IMR-90 (cell line): ENCODE measurements at regions of chr2 and their contacts with region 1.

Region 1: DNA sequence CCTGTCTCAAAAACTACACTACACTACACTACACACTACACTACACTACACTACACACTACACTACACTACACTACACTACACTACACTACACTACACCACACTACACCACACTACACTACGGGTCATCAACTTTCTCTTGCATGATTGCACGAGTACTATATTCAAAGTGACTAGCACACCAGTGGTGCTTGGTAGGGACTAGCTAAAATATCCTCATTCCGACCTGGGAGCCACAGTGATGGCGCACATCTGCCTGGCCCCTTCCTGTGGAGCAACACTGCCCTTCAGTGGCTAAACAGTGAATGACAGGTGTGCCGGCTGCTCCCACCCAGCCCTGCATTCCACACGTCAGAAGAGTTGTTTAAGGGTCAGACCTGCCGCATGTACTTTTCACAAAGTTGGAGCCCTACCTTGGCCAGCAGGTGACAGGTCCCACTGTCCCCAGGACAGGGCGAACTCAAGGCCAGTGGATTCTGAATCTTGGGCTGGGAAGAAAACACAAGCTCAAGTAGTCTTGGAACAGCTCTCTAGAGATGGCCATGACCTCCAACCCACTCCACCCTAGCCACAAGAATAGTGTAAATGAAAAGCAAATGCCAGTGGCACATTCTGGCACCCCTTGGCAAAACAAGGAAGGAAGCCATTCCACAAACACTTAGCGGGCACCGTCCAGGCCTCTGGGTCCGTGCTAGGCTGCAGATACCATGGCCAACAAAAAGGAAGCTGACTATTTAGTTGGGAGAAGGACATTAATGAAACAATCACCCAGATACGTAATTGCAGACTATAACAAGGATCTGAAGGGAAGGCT is 79.7 kb upstream of the MSH2 start:
- DNase-seq: peak; percentile 66
- ATAC-seq: peak; percentile 95
- H3K4me3 ChIP-seq: no peak overlapping the region
- H3K27ac ChIP-seq: no peak overlapping the region
- H3K4me1 ChIP-seq: peaks cover 7% of the 10 kb centered on the region
- H3K27me3 ChIP-seq: peaks cover 3% of the 10 kb centered on the region; the same call in 1 of the 2 replicates
- CTCF ChIP-seq: peak; percentile 97
- POLR2A ChIP-seq: peak; percentile 67
- RAD21 ChIP-seq: peak; percentile 100

Region 2: DNA sequence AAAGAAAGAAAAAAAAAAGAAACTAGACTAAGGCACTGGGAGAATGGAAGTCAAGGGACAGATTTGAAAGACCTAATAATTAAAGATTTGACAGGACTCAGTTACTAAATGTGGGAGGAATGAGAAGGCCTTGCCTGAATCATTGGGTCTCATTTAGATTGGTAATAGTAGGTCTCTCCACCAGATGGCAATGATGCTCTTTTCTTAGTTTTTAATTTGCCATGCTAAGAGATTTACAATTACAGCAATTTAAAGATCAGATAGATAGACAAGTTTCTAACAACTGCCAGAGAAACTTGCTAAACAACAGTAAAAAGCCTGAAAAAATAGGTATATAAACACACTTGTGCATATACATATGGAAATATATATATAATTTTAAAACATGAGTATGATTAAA is 690.9 kb before region 1 on chr2:
- CTCF ChIA-PET with region 1: no interaction called
- POLR2A ChIA-PET with region 1: no interaction called
- dilution Hi-C with region 1: no loop called
- in situ Hi-C with region 1: loop called (anchors 10 kb)
- intact Hi-C with region 1: loop called (anchors 1 kb)
- DNase-seq: peak; percentile 77
- ATAC-seq: peak; percentile 89
- H3K4me3 ChIP-seq: no peak overlapping the region
- H3K27ac ChIP-seq: no peak overlapping the region
- H3K4me1 ChIP-seq: 0 out of 2 replicates have a peak, but pooled peaks cover 1% of the 10 kb centered on the region
- H3K27me3 ChIP-seq: no peaks in the 10 kb centered on the region
- CTCF ChIP-seq: peak; percentile 78
- POLR2A ChIP-seq: no peak
- RAD21 ChIP-seq: peak; percentile 84

Region 3: DNA sequence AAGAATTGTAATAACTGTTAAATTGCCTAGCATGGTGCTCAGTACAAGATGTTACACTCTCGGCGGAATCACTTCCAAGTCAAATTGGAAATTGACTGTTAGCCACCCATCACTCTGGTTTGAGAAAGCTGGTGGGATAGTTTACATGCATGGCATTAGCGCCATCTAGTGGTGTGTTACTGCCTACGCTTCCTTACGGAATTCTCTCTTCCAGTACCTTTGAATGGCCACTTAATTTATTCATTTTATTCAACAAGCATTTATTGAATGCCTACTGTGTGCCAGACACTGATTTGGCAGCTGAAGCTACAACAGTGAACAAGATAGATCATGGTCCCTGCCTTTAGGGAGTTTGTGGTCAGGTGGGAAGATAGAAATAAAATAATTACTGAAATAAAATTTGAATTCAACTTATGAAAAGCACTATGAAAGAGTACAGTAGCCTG is 672.6 kb before region 1 on chr2:
- CTCF ChIA-PET with region 1: no interaction called
- POLR2A ChIA-PET with region 1: no interaction called
- dilution Hi-C with region 1: no loop called
- in situ Hi-C with region 1: no loop called
- intact Hi-C with region 1: loop called (anchors 5 kb)
- DNase-seq: peak; percentile 90
- ATAC-seq: peak; percentile 25
- H3K4me3 ChIP-seq: no peak overlapping the region
- H3K27ac ChIP-seq: no peak overlapping the region
- H3K4me1 ChIP-seq: peaks cover 28% of the 10 kb centered on the region
- H3K27me3 ChIP-seq: no peaks in the 10 kb centered on the region
- CTCF ChIP-seq: peak; percentile 95
- POLR2A ChIP-seq: peak; percentile 37; the same call in 1 of the 2 replicates
- RAD21 ChIP-seq: peak; percentile 90

Region 4: GRCh38 chr2:46915811-46916630 is 407.2 kb before region 1 on chr2:
- CTCF ChIA-PET with region 1: interaction called, 5 read pairs
- POLR2A ChIA-PET with region 1: no interaction called
- dilution Hi-C with region 1: no loop called
- in situ Hi-C with region 1: loop called (anchors 10 kb)
- intact Hi-C with region 1: loop called (anchors 1 kb)
- DNase-seq: peak; percentile 91
- ATAC-seq: peak; percentile 82
- H3K4me3 ChIP-seq: peak overlapping the region; percentile 84
- H3K27ac ChIP-seq: peak overlapping the region; percentile 88
- H3K4me1 ChIP-seq: peaks cover 9% of the 10 kb centered on the region
- H3K27me3 ChIP-seq: no peaks in the 10 kb centered on the region
- CTCF ChIP-seq: no peak
- POLR2A ChIP-seq: peak; percentile 39
- RAD21 ChIP-seq: no peak

Region 5: DNA sequence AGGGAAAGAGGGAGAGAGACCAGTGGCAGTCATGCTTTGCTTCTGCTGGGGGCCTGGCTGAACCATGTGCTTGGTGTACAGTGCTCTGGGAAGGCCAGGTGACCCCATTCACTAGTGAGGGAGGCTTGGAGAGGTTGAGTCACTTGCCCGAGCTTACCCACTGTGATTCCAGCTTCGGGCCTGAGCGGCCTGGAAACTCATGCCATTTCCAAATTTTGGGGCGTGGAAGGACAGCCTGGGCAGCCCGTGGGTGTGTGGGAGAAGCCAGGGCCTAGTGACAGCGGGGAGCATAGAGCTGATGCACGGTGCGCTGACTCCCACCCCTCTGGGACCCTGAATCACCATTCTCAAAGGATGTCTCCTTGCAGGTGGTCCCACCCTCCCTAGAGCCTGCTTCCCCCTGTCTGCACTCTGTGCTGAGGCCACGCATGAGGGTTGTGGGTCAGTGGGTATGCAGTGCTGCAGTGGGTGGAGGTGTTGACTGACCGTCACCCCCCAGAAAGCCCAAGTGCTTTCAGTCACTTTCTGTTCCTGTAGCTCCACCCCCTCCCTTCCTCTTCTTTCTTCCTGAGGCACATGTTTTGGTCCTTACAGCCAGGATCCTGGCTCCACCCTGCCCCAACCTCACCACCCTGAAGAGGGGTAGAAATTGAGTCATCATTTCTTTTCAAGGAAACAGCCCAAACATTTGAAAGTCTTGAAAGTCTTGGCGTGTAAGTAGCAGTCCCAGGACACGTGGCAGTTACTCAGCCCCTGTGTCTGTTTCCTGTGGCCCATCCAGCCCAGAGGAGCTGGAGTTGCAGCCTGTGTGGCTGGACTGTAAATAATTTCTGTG is 338.4 kb before region 1 on chr2:
- CTCF ChIA-PET with region 1: no interaction called
- POLR2A ChIA-PET with region 1: no interaction called
- dilution Hi-C with region 1: no loop called
- in situ Hi-C with region 1: loop called (anchors 5 kb)
- intact Hi-C with region 1: no loop called
- DNase-seq: peak; percentile 97
- ATAC-seq: peak; percentile 75
- H3K4me3 ChIP-seq: no peak overlapping the region
- H3K27ac ChIP-seq: peak overlapping the region; percentile 82
- H3K4me1 ChIP-seq: peaks cover 47% of the 10 kb centered on the region
- H3K27me3 ChIP-seq: no peaks in the 10 kb centered on the region
- CTCF ChIP-seq: no peak
- POLR2A ChIP-seq: peak; percentile 50; the same call in 1 of the 2 replicates
- RAD21 ChIP-seq: no peak; the same call in 1 of the 2 replicates

Region 6: GRCh38 chr2:47174733-47175361 is 148.4 kb before region 1 on chr2:
- CTCF ChIA-PET with region 1: interaction called, 10 read pairs
- POLR2A ChIA-PET with region 1: interaction called, 6 read pairs
- dilution Hi-C with region 1: no loop called
- in situ Hi-C with region 1: no loop called
- intact Hi-C with region 1: no loop called
- DNase-seq: peak; percentile 62
- ATAC-seq: no peak
- H3K4me3 ChIP-seq: peak overlapping the region; percentile 89
- H3K27ac ChIP-seq: peak overlapping the region; percentile 97
- H3K4me1 ChIP-seq: peaks cover 8% of the 10 kb centered on the region
- H3K27me3 ChIP-seq: no peaks in the 10 kb centered on the region
- CTCF ChIP-seq: no peak
- POLR2A ChIP-seq: peak; percentile 68
- RAD21 ChIP-seq: no peak; the same call in 1 of the 2 replicates

Region 7: GRCh38 chr2:47272031-47272864 is 51.0 kb before region 1 on chr2:
- CTCF ChIA-PET with region 1: interaction called, 5 read pairs
- POLR2A ChIA-PET with region 1: no interaction called
- dilution Hi-C with region 1: no loop called
- in situ Hi-C with region 1: no loop called
- intact Hi-C with region 1: loop called (anchors 2 kb)
- DNase-seq: peak; percentile 39
- ATAC-seq: peak; percentile 31
- H3K4me3 ChIP-seq: no peak overlapping the region
- H3K27ac ChIP-seq: no peak overlapping the region; the same call in 1 of the 2 replicates
- H3K4me1 ChIP-seq: peaks cover 17% of the 10 kb centered on the region
- H3K27me3 ChIP-seq: no peaks in the 10 kb centered on the region
- CTCF ChIP-seq: peak; percentile 75
- POLR2A ChIP-seq: no peak
- RAD21 ChIP-seq: peak; percentile 79

Region 8: GRCh38 chr2:47688561-47688960 is 365.3 kb after region 1 on chr2:
- CTCF ChIA-PET with region 1: no interaction called
- POLR2A ChIA-PET with region 1: no interaction called
- dilution Hi-C with region 1: no loop called
- in situ Hi-C with region 1: no loop called
- intact Hi-C with region 1: no loop called
- DNase-seq: no peak
- ATAC-seq: no peak
- H3K4me3 ChIP-seq: no peak overlapping the region
- H3K27ac ChIP-seq: no peak overlapping the region
- H3K4me1 ChIP-seq: no peaks in the 10 kb centered on the region
- H3K27me3 ChIP-seq: no peaks in the 10 kb centered on the region
- CTCF ChIP-seq: no peak
- POLR2A ChIP-seq: no peak
- RAD21 ChIP-seq: no peak